Head of caudate nucleus (tissue), 42 donors: ENCODE measurements at regions of chr5 and their contacts with region 1.

Region 1: GRCh38 chr5:88680253-88681132 is 202.5 kb downstream of the MEF2C start:
- DNase-seq: peak in 41 of 42 donors; percentile 68 to 97 (median 92)

Region 2: DNA sequence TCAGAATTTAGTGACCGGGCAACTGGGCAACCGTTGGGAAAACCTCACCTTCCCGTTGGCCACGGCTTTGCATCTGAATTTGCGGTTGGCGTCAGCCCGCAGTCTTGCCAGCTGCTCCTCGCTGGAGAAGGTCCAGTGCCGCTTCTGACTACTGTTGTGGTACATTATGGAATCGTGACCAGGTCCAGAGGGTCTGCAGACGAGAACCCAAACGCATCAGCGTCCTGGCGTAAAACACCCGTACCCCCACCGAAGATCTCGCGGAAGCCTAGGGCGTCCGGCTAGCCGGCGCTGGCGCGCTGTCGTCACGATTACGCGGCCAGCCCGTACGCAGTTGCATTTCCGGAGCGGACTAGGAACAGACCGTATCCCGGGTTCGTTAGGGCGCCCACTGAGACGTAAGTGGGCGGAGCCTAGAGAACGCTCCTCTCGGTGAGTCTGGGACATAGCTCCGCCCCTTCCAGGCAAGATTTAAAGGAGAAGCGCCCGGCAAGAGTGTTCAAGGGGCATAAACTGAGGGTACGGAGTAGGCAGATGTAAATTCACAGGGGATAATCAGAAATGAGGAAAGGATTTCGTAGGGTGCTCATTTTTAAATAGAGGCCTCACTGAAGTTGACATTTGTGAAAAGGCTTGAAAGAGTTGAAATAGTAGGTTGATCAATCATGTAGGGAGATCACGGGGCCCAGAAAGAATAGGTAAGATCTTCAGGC is 1267.7 kb before region 1 on chr5 and contains the start of gene CCNH:
- intact Hi-C with region 1: loop called (anchors 10 kb)
- DNase-seq: peak; percentile 96 to 100 (median 99)

Region 3: GRCh38 chr5:87899721-87900131 is 780.8 kb before region 1 on chr5:
- intact Hi-C with region 1: loop called (anchors 5 kb)
- DNase-seq: peak; percentile 15 to 88 (median 73)

Region 4: GRCh38 chr5:88140856-88141752 is 539.4 kb before region 1 on chr5:
- intact Hi-C with region 1: loop called (anchors 5 kb)
- DNase-seq: peak; percentile 97 to 100 (median 99)

Region 5: DNA sequence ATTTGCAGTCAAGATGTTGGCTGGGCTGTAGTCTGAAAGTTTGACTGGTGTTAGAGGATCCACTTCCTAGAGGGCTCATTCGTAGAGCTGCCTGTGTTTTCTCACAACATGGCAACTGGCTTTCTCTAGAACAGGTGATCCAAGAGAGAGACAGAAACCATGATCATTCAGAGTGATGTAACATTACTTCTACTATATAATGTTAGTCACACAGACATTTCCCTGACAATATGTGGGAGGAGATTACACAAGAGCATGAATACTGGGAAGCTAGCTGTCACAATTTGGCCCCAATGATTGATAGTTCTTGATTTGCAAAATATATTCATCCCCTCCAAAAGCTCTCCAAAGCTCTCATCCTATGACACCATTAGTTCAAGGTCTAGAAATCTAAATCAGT is 400.9 kb before region 1 on chr5:
- intact Hi-C with region 1: loop called (anchors 10 kb)
- DNase-seq: peak in 6 of 42 donors; percentile 11 to 44 (median 21)

Region 6: GRCh38 chr5:88322785-88323184 is 357.7 kb before region 1 on chr5:
- intact Hi-C with region 1: no loop called
- DNase-seq: no peak

Region 7: GRCh38 chr5:88398316-88398715 is 282.2 kb before region 1 on chr5:
- intact Hi-C with region 1: loop called (anchors 5 kb)
- DNase-seq: peak in 3 of 42 donors; percentile 35 to 65 (median 47)

Region 8: DNA sequence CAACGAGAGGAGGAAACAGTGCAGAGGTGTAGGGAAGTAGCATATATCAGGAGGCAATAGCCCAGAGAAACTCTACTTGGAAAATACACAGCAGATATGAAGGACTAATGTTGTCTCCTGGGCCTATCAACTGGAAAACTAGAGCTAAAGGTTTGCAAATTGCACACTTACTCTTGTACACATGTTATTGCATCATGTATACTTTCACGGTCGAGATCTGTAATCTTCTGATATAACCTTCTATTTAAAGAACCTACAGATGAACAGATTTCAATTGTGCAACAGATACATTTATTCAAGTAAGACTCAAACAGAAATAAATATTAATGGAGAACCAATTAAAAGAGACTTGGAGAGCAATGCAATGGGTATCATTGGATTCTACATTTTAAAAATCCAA is 155.6 kb before region 1 on chr5:
- intact Hi-C with region 1: no loop called
- DNase-seq: no peak

Region 9: DNA sequence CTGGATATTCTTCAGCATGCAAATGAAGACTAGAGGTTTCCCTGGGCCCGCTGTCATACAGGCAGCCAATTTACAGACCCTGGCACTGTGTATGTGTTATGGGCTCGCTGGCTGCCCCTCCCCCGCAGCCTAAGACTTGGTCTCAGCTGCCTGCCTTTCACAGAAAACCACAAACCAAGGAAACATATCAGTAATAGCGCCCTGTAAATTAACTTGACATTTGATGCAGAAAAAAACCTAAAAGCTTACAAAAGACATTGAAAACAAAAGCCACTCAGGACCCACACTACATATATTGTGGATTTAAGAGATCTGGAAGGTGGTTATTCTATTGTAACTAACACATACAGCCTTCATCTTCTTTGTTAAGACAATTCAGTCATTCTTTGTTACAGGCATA is 124.8 kb before region 1 on chr5:
- intact Hi-C with region 1: loop called (anchors 10 kb)
- DNase-seq: peak in 41 of 42 donors; percentile 8 to 75 (median 40)

Region 10: GRCh38 chr5:88925692-88926490 is 245.4 kb after region 1 on chr5:
- intact Hi-C with region 1: no loop called
- DNase-seq: no peak